ENCODE measurements at regions of chr11 and their contacts with region 1.

Region 1: DNA sequence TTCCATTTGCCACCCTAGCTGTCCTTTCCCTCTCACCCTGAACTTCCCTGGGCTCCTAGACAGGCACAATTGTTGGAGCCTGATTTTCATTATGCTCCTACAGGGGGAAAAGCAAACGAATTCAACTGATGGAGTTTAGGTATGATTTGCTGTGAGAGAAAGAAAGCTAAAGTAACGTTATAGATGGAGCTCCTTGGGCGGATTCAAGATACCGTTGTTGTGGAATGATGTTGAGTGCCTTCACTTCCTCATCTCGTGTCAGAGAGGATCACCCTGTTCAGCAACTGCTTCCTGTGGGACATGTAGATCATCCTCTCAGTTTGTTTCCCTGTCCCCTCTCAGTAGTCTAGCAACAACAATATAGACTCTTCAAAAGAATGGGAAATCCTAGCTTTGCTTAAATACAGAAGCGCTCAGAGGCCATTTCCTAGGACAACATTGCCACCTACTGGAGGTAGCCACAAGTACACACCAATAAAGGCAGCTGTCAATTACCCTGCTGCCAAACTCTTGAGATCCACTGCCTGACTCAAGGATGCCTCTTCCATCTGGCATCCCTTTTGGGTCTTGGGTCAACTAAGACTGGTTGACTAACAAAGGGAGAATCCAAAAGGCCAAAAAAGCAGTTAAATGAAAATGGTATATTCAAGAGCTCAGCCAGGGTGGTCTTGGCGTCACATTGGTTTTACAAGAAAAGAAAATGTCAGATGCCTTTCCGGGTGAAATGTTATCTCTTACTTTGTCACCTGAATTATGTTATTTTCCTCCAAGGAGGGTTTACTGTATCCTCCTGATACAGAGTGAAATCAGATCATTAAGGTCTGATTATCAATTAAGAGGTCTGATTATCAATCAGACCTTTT is 13.5 kb upstream of the DTX4 start:
- DNase-seq: peak in 3 of 5 donors; percentile 25 to 49 (median 36)
- ATAC-seq: peak; percentile 52 to 86 (median 84)
- H3K4me3 ChIP-seq: no peak overlapping the region
- H3K27ac ChIP-seq: no peak overlapping the region
- H3K4me1 ChIP-seq: peaks cover 0 to 4% (median 0%) of the 10 kb centered on the region in 12 donors
- H3K27me3 ChIP-seq: peaks cover 0 to 11% (median 0%) of the 10 kb centered on the region in 9 donors
- CTCF ChIP-seq: peak; percentile 73 to 88 (median 80)
- POLR2A ChIP-seq: no peak

Region 2: DNA sequence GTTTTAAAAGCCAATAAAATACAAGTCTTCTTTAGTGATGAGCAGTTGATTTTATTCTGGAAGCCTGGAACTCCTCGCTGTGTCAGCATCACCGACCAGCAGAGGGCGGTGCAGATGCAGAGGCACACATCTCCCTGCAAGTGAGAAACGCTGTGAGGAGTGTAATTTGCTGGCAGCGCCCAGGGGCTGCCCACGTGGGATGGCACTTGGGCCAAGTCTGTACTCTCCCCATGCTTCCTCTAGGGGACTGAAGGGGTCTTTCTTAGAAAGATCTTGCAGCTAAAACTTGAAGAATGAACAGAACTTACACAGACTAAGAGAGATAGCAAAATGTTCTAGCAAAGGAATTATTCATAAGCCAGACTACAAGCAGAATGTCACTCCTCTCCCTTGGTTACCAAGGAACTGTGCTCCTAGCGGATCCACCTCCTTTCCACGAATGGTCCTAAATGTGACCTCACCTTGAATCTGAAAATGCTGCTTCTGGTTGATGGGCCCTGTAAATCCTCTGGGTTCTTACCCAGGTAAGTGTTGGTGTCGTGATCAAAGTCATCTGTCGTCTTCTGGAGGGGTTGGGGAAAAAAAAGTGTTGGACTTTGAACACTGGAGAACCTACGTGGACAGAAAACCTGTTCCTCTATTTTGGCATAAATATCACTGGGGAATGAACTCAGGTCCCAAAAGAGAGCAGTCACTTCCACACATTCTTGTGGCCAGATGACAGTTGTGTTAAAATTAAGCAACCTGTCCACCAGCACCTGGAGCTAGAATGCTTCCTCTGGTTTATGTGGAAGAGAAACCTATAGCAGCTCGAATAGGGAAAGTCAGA is 504.1 kb before region 1 on chr11:
- intact Hi-C with region 1: loop called in 2 of 10 experiments (anchors 10 kb)
- DNase-seq: peak; percentile 70 to 89 (median 78)
- ATAC-seq: peak; percentile 79 to 97 (median 92)
- H3K4me3 ChIP-seq: no peak overlapping the region
- H3K27ac ChIP-seq: no peak overlapping the region
- H3K4me1 ChIP-seq: peaks cover 0 to 21% (median 4%) of the 10 kb centered on the region in 12 donors
- H3K27me3 ChIP-seq: no peaks in the 10 kb centered on the region
- CTCF ChIP-seq: peak; percentile 75 to 95 (median 88)
- POLR2A ChIP-seq: no peak

Region 3: GRCh38 chr11:58693041-58693440 is 465.4 kb before region 1 on chr11:
- intact Hi-C with region 1: no loop called
- DNase-seq: no peak
- ATAC-seq: no peak
- H3K4me3 ChIP-seq: no peak overlapping the region
- H3K27ac ChIP-seq: no peak overlapping the region
- H3K4me1 ChIP-seq: no peaks in the 10 kb centered on the region
- H3K27me3 ChIP-seq: no peaks in the 10 kb centered on the region
- CTCF ChIP-seq: no peak
- POLR2A ChIP-seq: no peak

Region 4: DNA sequence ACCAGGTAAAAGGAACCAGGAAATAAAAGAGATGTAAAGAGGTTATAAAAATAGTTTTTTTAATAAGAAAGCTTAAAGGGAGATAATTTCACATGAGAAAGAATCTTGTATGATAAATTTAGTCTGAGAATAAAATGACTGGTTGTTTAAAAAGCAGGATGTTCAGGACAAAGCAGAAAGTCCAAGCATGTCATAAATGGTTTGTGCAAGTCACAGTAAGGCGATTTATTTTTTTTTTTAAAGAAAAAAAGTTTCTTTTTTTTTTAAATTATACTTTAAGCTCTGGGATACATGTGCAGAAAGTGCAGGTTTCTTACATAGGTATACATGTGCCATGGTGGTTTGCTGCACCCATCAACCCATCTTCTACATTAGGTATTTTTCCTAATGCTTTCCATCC is 344.7 kb before region 1 on chr11:
- intact Hi-C with region 1: no loop called
- DNase-seq: no peak
- ATAC-seq: no peak
- H3K4me3 ChIP-seq: no peak overlapping the region
- H3K27ac ChIP-seq: no peak overlapping the region
- H3K4me1 ChIP-seq: no peaks in the 10 kb centered on the region
- H3K27me3 ChIP-seq: no peaks in the 10 kb centered on the region
- CTCF ChIP-seq: no peak
- POLR2A ChIP-seq: no peak

Region 5: GRCh38 chr11:59053387-59053786 is 105.0 kb before region 1 on chr11:
- intact Hi-C with region 1: loop called in 3 of 10 experiments (anchors 5 to 10 kb)
- DNase-seq: peak; percentile 34 to 68 (median 43)
- ATAC-seq: no peak
- H3K4me3 ChIP-seq: no peak overlapping the region
- H3K27ac ChIP-seq: no peak overlapping the region
- H3K4me1 ChIP-seq: peaks cover 0 to 7% (median 0%) of the 10 kb centered on the region in 12 donors
- H3K27me3 ChIP-seq: peaks cover 0 to 29% (median under 1%) of the 10 kb centered on the region in 9 donors
- CTCF ChIP-seq: peak; percentile 40 to 70 (median 60)
- POLR2A ChIP-seq: no peak

Region 6: DNA sequence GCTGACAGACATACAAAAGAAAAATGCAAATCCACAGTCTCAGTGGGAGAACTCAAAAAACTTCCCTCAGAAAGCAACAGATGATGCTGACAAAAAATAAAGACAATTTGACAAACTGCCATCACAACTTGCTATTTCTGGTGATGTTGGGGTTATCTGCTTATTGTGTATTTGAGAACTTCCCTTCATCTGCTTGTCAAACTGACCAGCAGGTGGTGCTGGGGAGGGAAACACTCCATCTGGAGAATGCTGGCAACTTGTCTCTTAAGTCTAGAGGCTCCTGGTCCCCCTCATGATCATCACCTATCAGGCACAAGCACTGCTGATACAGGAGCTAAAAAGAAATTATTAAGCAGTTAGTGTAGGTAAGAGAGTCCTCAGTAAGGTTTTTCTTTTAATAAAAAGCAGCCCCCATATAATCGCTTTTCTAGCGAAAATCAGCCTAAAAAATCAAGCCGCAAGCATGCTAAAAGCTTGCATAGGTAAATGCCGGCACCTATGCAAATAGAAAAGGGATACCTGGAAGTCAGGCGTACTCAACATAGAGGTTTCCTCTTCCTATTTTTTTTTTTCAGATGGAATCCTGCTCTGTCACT is 61.2 kb before region 1 on chr11:
- intact Hi-C with region 1: loop called in 4 of 10 experiments (anchors 5 to 10 kb)
- DNase-seq: peak in 3 of 5 donors; percentile 42 to 54 (median 45)
- ATAC-seq: no peak
- H3K4me3 ChIP-seq: no peak overlapping the region
- H3K27ac ChIP-seq: no peak overlapping the region
- H3K4me1 ChIP-seq: peaks cover 0 to 6% (median 0%) of the 10 kb centered on the region in 12 donors
- H3K27me3 ChIP-seq: peaks cover 0 to 38% (median 11%) of the 10 kb centered on the region in 9 donors
- CTCF ChIP-seq: peak; percentile 40 to 73 (median 60)
- POLR2A ChIP-seq: no peak

Region 7: GRCh38 chr11:59102259-59102765 is 56.1 kb before region 1 on chr11:
- intact Hi-C with region 1: loop called in 4 of 10 experiments (anchors 5 to 10 kb)
- DNase-seq: peak; percentile 22 to 68 (median 38)
- ATAC-seq: peak in 1 of 4 donors; percentile 44
- H3K4me3 ChIP-seq: peak overlapping the region in 9 of 12 donors; percentile 1 to 54 (median 17)
- H3K27ac ChIP-seq: no peak overlapping the region
- H3K4me1 ChIP-seq: peaks cover 0 to 17% (median 6%) of the 10 kb centered on the region in 12 donors
- H3K27me3 ChIP-seq: peaks cover 0 to 43% (median 19%) of the 10 kb centered on the region in 9 donors
- CTCF ChIP-seq: peak in 7 of 12 donors; percentile 7 to 28 (median 19)
- POLR2A ChIP-seq: no peak

Measured in heart left ventricle (tissue), 16 donors.